IMR-90 (cell line): ENCODE measurements at regions of chr1 and their contacts with region 1.

Region 1: GRCh38 chr1:203726417-203726867 is 38.5 kb upstream of the LAX1 start:
- DNase-seq: no peak
- ATAC-seq: no peak
- H3K4me3 ChIP-seq: no peak overlapping the region
- H3K27ac ChIP-seq: no peak overlapping the region
- H3K4me1 ChIP-seq: no peaks in the 10 kb centered on the region
- H3K27me3 ChIP-seq: no peaks in the 10 kb centered on the region
- CTCF ChIP-seq: no peak
- POLR2A ChIP-seq: no peak
- RAD21 ChIP-seq: no peak

Region 2: GRCh38 chr1:203351037-203352013 is 375.1 kb before region 1 on chr1 and contains the start of gene FMOD:
- CTCF ChIA-PET with region 1: no interaction called
- POLR2A ChIA-PET with region 1: interaction called, 16 read pairs
- dilution Hi-C with region 1: no loop called
- in situ Hi-C with region 1: no loop called
- intact Hi-C with region 1: no loop called
- DNase-seq: peak; percentile 46
- ATAC-seq: peak; percentile 42
- H3K4me3 ChIP-seq: no peak within 1 kb of the TSS; the same call in 1 of the 2 replicates
- H3K27ac ChIP-seq: no peak within 1 kb of the TSS
- H3K4me1 ChIP-seq: peaks cover 6% of the 10 kb centered on the region
- H3K27me3 ChIP-seq: peaks cover 28% of the 10 kb centered on the region
- CTCF ChIP-seq: no peak
- POLR2A ChIP-seq: no peak
- RAD21 ChIP-seq: no peak
- total RNA-seq, gene FMOD: 0.18 and 0.28 TPM in 2 replicates